Endothelial cell of umbilical vein (primary cell): ENCODE measurements at regions of chr6 and their contacts with region 1.

Region 1: GRCh38 chr6:116268589-116269293 is 11.0 kb downstream of the TSPYL1 start:
- DNase-seq: peak; percentile 82
- H3K4me3 ChIP-seq: no peak overlapping the region
- H3K27ac ChIP-seq: no peak overlapping the region
- H3K4me1 ChIP-seq: no peaks in the 10 kb centered on the region
- H3K27me3 ChIP-seq: no peaks in the 10 kb centered on the region
- CTCF ChIP-seq: peak; percentile 63 to 68
- POLR2A ChIP-seq: no peak

Region 2: GRCh38 chr6:115899730-115900282 is 368.9 kb before region 1 on chr6:
- CTCF ChIA-PET with region 1: no interaction called
- POLR2A ChIA-PET with region 1: no interaction called
- dilution Hi-C with region 1: no loop called
- intact Hi-C with region 1: no loop called
- DNase-seq: no peak
- H3K4me3 ChIP-seq: no peak overlapping the region
- H3K27ac ChIP-seq: no peak overlapping the region
- H3K4me1 ChIP-seq: no peaks in the 10 kb centered on the region
- H3K27me3 ChIP-seq: no peaks in the 10 kb centered on the region
- CTCF ChIP-seq: no peak
- POLR2A ChIP-seq: no peak

Region 3: GRCh38 chr6:116246089-116246488 is 22.7 kb before region 1 on chr6:
- CTCF ChIA-PET with region 1: interaction called, 21 read pairs
- POLR2A ChIA-PET with region 1: no interaction called
- dilution Hi-C with region 1: no loop called
- intact Hi-C with region 1: no loop called
- DNase-seq: peak; percentile 75
- H3K4me3 ChIP-seq: peak overlapping the region in 1 of 3 experiments; percentile 12
- H3K27ac ChIP-seq: peak overlapping the region; percentile 42
- H3K4me1 ChIP-seq: peaks cover 29% of the 10 kb centered on the region
- H3K27me3 ChIP-seq: no peaks in the 10 kb centered on the region
- CTCF ChIP-seq: no peak
- POLR2A ChIP-seq: no peak

Region 4: DNA sequence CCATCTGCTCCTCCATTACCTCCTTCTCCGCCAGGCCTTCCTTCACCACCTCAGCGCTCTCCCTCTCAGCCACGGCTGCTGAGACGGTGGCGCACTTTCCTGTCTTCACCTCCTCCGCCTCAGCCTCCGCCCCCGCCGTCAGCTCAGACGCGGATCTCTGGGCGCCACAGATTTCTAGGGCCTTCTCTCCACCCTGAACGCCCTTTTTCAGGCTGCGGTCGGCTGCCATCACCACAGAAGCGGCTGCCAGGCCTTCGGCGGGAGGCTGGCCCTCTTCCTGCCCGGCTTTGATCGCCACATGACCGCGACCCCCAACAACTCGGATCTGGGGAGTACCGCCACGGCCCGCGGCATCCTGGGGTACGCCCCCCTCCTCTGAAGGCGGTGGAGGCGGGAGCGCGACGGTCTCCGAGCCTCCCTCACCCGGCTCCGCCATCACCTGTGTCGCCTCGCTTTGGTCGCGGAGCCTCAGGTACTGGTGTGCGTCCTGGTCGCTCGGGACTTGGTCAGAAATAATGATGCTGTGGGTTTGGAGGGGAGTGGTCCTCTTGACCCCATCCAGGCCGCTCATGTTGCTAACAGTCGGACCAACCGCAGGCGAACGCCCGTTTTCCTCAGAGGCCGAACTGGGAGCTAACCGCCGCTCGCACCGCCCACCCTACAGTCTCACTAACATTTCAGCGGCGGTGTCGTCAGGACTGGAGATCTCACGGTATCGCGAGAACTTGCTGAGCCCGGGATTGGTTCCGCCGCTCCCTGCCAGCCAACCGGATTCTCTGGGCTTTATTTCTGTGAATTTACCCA is 10.7 kb after region 1 on chr6 and contains the start of gene TSPYL1:
- CTCF ChIA-PET with region 1: interaction called, 77 read pairs
- POLR2A ChIA-PET with region 1: interaction called, 3 read pairs
- dilution Hi-C with region 1: no loop called
- intact Hi-C with region 1: no loop called
- DNase-seq: peak; percentile 98
- H3K4me3 ChIP-seq: peak within 1 kb of the TSS; percentile 44 to 79 (median 53)
- H3K27ac ChIP-seq: peak within 1 kb of the TSS; percentile 84
- H3K4me1 ChIP-seq: peaks cover 37% of the 10 kb centered on the region
- H3K27me3 ChIP-seq: no peaks in the 10 kb centered on the region
- CTCF ChIP-seq: no peak
- POLR2A ChIP-seq: peak; percentile 90
- total RNA-seq, gene TSPYL1: 54.5 and 57.3 TPM in 2 replicates

Region 5: GRCh38 chr6:116511404-116512110 is 242.8 kb after region 1 on chr6 and contains the start of gene CALHM5:
- CTCF ChIA-PET with region 1: interaction called, 38 read pairs
- POLR2A ChIA-PET with region 1: no interaction called
- dilution Hi-C with region 1: no loop called
- intact Hi-C with region 1: no loop called
- DNase-seq: peak; percentile 91
- H3K4me3 ChIP-seq: peak within 1 kb of the TSS; percentile 26 to 82 (median 35)
- H3K27ac ChIP-seq: peak within 1 kb of the TSS; percentile 95
- H3K4me1 ChIP-seq: peaks cover 19% of the 10 kb centered on the region
- H3K27me3 ChIP-seq: no peaks in the 10 kb centered on the region
- CTCF ChIP-seq: peak; percentile 55 to 67
- POLR2A ChIP-seq: peak; percentile 67
- total RNA-seq, gene CALHM5: 6.6 and 7.1 TPM in 2 replicates

Region 6: DNA sequence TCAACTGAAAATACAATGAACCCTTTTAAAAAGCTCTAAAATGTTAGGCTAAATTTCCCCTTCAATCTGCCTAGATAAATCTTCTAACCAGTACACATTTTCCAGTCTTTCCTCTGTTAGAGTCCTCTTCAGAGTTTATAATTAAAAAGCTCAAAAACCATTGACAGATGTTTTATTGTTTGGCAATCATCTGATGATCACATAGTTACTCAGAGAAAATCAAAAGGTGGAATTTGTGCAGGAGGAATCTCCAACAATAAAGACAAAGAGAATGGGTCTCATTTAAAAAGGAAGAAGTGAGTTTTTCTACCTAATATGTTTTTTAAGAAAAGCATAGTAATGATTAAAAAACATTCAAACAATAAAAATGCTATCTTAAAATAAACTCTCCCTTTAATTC is 273.7 kb after region 1 on chr6:
- CTCF ChIA-PET with region 1: interaction called, 13 read pairs
- POLR2A ChIA-PET with region 1: no interaction called
- dilution Hi-C with region 1: no loop called
- intact Hi-C with region 1: no loop called
- DNase-seq: no peak
- H3K4me3 ChIP-seq: no peak overlapping the region
- H3K27ac ChIP-seq: no peak overlapping the region
- H3K4me1 ChIP-seq: no peaks in the 10 kb centered on the region
- H3K27me3 ChIP-seq: no peaks in the 10 kb centered on the region
- CTCF ChIP-seq: no peak
- POLR2A ChIP-seq: no peak

Region 7: GRCh38 chr6:116570856-116571682 is 302.3 kb after region 1 on chr6 and contains the start of gene RWDD1:
- CTCF ChIA-PET with region 1: interaction called, 33 read pairs
- POLR2A ChIA-PET with region 1: no interaction called
- dilution Hi-C with region 1: no loop called
- intact Hi-C with region 1: no loop called
- DNase-seq: peak; percentile 99
- H3K4me3 ChIP-seq: peak within 1 kb of the TSS; percentile 87 to 98 (median 98)
- H3K27ac ChIP-seq: peak within 1 kb of the TSS; percentile 84
- H3K4me1 ChIP-seq: peaks cover 33% of the 10 kb centered on the region
- H3K27me3 ChIP-seq: no peaks in the 10 kb centered on the region
- CTCF ChIP-seq: no peak
- POLR2A ChIP-seq: peak; percentile 89
- total RNA-seq, gene RWDD1: 37.9 and 44.2 TPM in 2 replicates

Region 8: GRCh38 chr6:116969211-116969863 is 700.6 kb after region 1 on chr6:
- CTCF ChIA-PET with region 1: interaction called, 11 read pairs
- POLR2A ChIA-PET with region 1: no interaction called
- dilution Hi-C with region 1: no loop called
- intact Hi-C with region 1: loop called (anchors 5 kb)
- DNase-seq: peak; percentile 50
- H3K4me3 ChIP-seq: no peak overlapping the region
- H3K27ac ChIP-seq: no peak overlapping the region
- H3K4me1 ChIP-seq: no peaks in the 10 kb centered on the region
- H3K27me3 ChIP-seq: no peaks in the 10 kb centered on the region
- CTCF ChIP-seq: peak; percentile 38 to 49
- POLR2A ChIP-seq: no peak